Ascending aorta (tissue), 2 donors: ENCODE measurements at regions of chr5 and their contacts with region 1.

Region 1: GRCh38 chr5:130055572-130055971 is 151.3 kb downstream of the CHSY3 start:
- DNase-seq: peak in 1 of 2 donors; percentile 70
- H3K4me3 ChIP-seq: no peak overlapping the region
- H3K27ac ChIP-seq: peak overlapping the region; percentile 28 to 43
- H3K4me1 ChIP-seq: peaks cover 4 to 5% of the 10 kb centered on the region in 2 donors
- H3K27me3 ChIP-seq: no peaks in the 10 kb centered on the region
- CTCF ChIP-seq: no peak

Region 2: GRCh38 chr5:129963359-129963758 is 92.2 kb before region 1 on chr5:
- intact Hi-C with region 1: loop called (anchors 5 kb)
- DNase-seq: peak in 1 of 2 donors; percentile 64
- H3K4me3 ChIP-seq: no peak overlapping the region
- H3K27ac ChIP-seq: peak overlapping the region; percentile 74 to 75
- H3K4me1 ChIP-seq: peaks cover 0 to 17% of the 10 kb centered on the region in 2 donors
- H3K27me3 ChIP-seq: no peaks in the 10 kb centered on the region
- CTCF ChIP-seq: no peak